PC-9 (cell line): ENCODE measurements at regions of chr9 and their contacts with region 1.

Region 1: GRCh38 chr9:69121828-69122548 is 52.1 kb upstream of the TJP2 start:
- DNase-seq: peak; percentile 46 to 47
- H3K4me3 ChIP-seq: peak overlapping the region; percentile 83
- H3K27ac ChIP-seq: peak overlapping the region; percentile 99
- H3K4me1 ChIP-seq: peaks cover 27% of the 10 kb centered on the region
- H3K27me3 ChIP-seq: no peaks in the 10 kb centered on the region
- CTCF ChIP-seq: no peak

Region 2: GRCh38 chr9:69035438-69036308 is 86.3 kb before region 1 on chr9 and contains the start of gene FXN:
- CTCF ChIA-PET with region 1: no interaction called
- POLR2A ChIA-PET with region 1: no interaction called
- intact Hi-C with region 1: loop called (anchors 1 kb)
- DNase-seq: peak; percentile 48 to 85
- H3K4me3 ChIP-seq: peak within 1 kb of the TSS; percentile 93
- H3K27ac ChIP-seq: 0 out of 2 replicates have a peak within 1 kb of the TSS, but pooled peaks have one; percentile 21
- H3K4me1 ChIP-seq: 0 out of 2 replicates have a peak, but pooled peaks cover 10% of the 10 kb centered on the region
- H3K27me3 ChIP-seq: no peaks in the 10 kb centered on the region
- CTCF ChIP-seq: peak; percentile 92
- total RNA-seq, gene FXN: 12.0 and 19.5 TPM in 2 replicates

Region 3: DNA sequence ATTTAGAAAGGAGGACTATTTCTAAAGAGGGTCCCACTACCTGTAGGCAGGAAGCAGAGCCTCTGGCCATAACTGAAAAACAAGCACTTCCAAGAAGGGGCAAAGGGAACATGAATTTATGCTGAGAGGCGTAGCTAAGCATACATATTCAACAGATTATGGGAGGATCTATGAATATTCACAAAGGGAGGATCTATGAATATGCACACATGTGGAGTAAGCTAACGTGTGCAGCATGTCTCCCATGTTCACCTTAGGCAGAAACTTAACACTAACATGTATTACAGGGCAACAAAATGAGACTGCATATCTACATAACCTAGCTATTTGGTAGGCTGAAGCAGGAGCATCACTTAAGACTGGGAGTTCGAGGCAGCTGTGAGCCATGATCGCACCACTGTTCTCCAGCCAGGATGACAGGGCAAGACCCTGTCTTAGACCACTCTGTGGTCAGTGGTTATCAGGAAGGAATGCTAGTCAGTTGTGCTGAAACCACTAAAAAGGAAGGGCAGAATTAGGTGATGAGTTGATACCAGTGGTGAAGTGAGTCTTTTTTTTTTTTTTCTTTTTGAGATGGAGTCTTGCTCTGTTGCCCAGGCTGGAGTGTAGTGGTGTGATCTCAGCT is 65.7 kb before region 1 on chr9:
- CTCF ChIA-PET with region 1: interaction called, 3 read pairs
- POLR2A ChIA-PET with region 1: interaction called, 13 read pairs
- intact Hi-C with region 1: loop called (anchors 1 kb)
- DNase-seq: no peak
- H3K4me3 ChIP-seq: no peak overlapping the region
- H3K27ac ChIP-seq: no peak overlapping the region
- H3K4me1 ChIP-seq: no peaks in the 10 kb centered on the region
- H3K27me3 ChIP-seq: no peaks in the 10 kb centered on the region
- CTCF ChIP-seq: no peak

Region 4: DNA sequence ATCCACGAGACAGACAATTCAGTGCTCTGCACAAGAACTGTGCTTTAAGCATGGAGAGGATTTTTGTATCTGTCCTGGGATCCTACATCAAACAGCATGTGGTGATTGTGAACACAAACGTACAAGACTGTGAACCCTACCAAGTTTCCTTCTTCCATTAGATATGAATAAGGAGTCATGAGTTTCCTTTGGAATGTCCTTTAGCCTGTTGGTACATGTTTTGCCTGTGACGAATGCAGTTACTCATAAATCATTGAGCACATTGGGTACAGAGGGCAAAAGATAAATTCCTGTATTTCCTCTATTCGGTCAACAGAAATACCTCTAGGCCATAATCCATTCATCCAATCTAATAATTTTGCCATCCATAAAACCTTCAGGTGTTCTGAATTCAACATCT is 24.9 kb before region 1 on chr9:
- CTCF ChIA-PET with region 1: no interaction called
- POLR2A ChIA-PET with region 1: no interaction called
- intact Hi-C with region 1: loop called (anchors 1 kb)
- DNase-seq: peak; percentile 20 to 94
- H3K4me3 ChIP-seq: no peak overlapping the region
- H3K27ac ChIP-seq: peak overlapping the region; percentile 79
- H3K4me1 ChIP-seq: peaks cover 30% of the 10 kb centered on the region
- H3K27me3 ChIP-seq: no peaks in the 10 kb centered on the region
- CTCF ChIP-seq: no peak

Region 5: DNA sequence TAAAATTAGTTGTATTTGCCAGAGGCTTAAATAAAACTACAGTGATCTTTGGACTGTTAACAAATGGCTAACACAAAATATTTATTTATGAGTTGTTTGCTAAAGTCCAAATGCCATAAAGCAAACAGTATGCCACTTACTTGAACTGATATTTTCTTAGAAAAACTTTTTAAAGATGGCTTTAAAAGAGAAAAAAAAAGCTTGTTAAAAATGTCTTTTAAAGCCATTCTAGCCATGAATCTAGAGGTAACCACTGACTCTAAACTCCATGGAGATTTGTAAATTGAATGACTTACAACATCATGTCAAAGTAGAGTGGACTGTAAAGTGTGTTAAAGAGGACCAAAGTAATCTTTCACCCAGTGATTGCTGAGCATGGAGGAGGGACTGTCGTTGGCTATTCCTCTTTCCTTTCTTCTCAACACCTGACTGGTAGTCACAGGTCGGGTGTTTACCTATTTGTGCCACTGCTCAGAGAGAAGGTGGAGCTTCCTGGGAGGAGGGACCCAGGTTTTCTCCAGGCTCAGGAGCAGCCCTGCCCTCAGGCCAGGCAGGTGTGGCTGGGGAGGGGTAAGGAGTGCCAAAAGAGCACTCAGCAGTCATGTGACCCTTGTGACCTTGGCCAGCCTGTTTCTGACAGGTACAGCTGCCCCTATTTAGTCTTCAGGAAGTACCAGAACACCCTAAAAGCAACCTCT is 17.0 kb before region 1 on chr9:
- CTCF ChIA-PET with region 1: no interaction called
- POLR2A ChIA-PET with region 1: interaction called, 4 read pairs
- intact Hi-C with region 1: loop called (anchors 1 kb)
- DNase-seq: peak; percentile 93 to 97
- H3K4me3 ChIP-seq: peak overlapping the region; percentile 25; the same call in 1 of the 2 replicates
- H3K27ac ChIP-seq: peak overlapping the region; percentile 65
- H3K4me1 ChIP-seq: peaks cover 38% of the 10 kb centered on the region
- H3K27me3 ChIP-seq: no peaks in the 10 kb centered on the region
- CTCF ChIP-seq: no peak

Region 6: GRCh38 chr9:69180670-69181069 is 58.7 kb after region 1 on chr9:
- CTCF ChIA-PET with region 1: interaction called, 4 read pairs
- POLR2A ChIA-PET with region 1: interaction called, 16 read pairs
- intact Hi-C with region 1: loop called (anchors 2 kb)
- DNase-seq: peak; percentile 86 to 99
- H3K4me3 ChIP-seq: peak overlapping the region; percentile 36; the same call in 1 of the 2 replicates
- H3K27ac ChIP-seq: peak overlapping the region; percentile 97
- H3K4me1 ChIP-seq: peaks cover 79% of the 10 kb centered on the region
- H3K27me3 ChIP-seq: no peaks in the 10 kb centered on the region
- CTCF ChIP-seq: no peak

Region 7: GRCh38 chr9:69193685-69194032 is 71.7 kb after region 1 on chr9:
- CTCF ChIA-PET with region 1: interaction called, 13 read pairs
- POLR2A ChIA-PET with region 1: interaction called, 3 read pairs
- intact Hi-C with region 1: loop called (anchors 1 kb)
- DNase-seq: no peak
- H3K4me3 ChIP-seq: no peak overlapping the region
- H3K27ac ChIP-seq: no peak overlapping the region
- H3K4me1 ChIP-seq: peaks cover 38% of the 10 kb centered on the region; the same call in 1 of the 2 replicates
- H3K27me3 ChIP-seq: no peaks in the 10 kb centered on the region
- CTCF ChIP-seq: no peak

Region 8: GRCh38 chr9:69297300-69297980 is 175.5 kb after region 1 on chr9:
- CTCF ChIA-PET with region 1: no interaction called
- POLR2A ChIA-PET with region 1: no interaction called
- intact Hi-C with region 1: no loop called
- DNase-seq: no peak
- H3K4me3 ChIP-seq: no peak overlapping the region
- H3K27ac ChIP-seq: no peak overlapping the region
- H3K4me1 ChIP-seq: no peaks in the 10 kb centered on the region; the same call in 1 of the 2 replicates
- H3K27me3 ChIP-seq: no peaks in the 10 kb centered on the region; the same call in 1 of the 2 replicates
- CTCF ChIP-seq: no peak